ENCODE measurements at regions of chr1 and their contacts with region 1.

Region 1: DNA sequence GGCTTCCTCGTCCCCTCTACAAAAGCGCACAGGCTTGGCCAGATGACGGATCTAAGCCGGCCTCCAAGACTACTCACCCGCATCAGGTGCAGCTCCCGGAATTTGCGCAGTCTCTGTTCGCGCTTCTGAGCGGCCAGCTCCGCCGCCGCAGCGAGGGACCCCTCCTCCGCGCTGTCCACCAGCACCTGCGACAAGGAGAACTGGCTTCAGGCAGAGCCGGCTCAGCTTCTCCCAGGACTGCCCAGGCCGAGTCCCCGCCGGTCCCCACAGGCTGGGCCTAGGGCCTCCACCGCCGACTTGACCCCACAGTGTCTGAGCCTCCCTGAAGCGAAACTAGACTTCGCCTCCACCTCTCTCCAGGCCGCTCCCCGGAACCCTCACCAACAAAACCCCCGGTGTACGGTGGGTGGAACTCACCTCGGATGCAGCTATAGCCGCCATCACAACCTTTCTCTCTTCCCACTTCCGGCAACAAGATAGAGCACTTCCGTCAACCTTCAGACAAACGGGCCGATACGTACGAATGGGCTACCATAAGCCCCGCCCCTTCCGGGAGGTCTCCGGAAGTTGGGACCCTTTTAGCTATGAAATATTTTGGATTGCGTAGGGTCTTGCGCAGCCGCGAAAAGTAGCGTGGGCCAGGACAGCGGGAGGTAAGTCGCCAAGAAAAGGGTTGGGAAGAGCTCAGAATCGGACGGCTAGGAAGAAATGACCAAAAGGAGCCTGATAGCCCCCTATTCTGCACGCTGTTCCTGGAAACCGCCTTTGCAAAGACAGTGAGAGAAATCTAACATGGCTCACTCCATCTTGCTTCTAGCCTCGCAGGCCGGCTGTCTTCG is at the start of gene SYF2:
- DNase-seq: peak; percentile 71 to 93 (median 90)
- ATAC-seq: peak; percentile 94
- H3K4me3 ChIP-seq: peak within 1 kb of the TSS; percentile 92
- H3K4me3 Mint-ChIP-seq: no peak within 1 kb of the TSS
- H3K27ac ChIP-seq: peak within 1 kb of the TSS; percentile 91
- H3K27ac Mint-ChIP-seq: no peak within 1 kb of the TSS
- H3K4me1 ChIP-seq: peaks cover 14 to 15% of the 10 kb centered on the region in 2 donors
- H3K4me1 Mint-ChIP-seq: peaks cover 18 to 33% (median 30%) of the 10 kb centered on the region in 7 donors
- H3K27me3 ChIP-seq: no peaks in the 10 kb centered on the region
- H3K27me3 Mint-ChIP-seq: no peaks in the 10 kb centered on the region
- total RNA-seq, gene SYF2: 44.4 to 83.3 (median 59.4) TPM

Region 2: DNA sequence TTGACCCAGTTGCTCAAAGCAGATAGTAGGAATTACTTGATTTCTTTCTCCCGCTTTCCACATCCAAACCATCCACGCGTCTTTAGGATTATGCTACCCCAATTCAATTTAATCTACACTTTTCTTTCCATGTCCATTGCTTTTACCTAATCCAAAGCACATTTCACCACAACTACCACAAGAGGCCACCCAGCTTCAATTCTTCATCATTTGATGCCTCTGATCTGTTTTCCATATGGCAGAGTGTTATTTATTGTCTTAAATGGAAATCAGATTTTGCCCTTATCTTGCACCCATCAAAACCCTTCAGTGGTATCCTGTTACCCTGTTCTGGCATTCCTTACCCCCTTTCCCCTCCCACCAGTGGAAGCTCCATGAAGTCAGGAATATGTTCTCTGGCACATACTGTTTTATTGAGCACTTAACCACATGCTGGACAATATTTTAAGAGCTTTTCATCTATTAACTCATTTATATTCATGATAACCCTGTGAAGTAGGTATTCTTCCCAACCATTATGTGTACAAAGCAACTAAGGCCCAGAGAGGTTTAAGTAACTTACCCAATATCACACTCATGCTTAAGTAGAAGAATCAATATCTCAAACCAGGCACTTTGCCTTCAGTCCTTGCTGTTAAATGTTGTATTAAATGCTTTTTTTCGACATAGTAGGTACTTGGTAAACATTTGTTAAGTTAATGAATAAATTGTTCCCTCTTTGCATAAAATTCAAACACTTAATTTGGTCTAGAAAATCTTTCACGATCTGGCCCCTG is 452.4 kb before region 1 on chr1:
- CTCF ChIA-PET with region 1: no interaction called
- POLR2A ChIA-PET with region 1: no interaction called
- intact Hi-C with region 1: no loop called
- DNase-seq: no peak
- ATAC-seq: no peak
- H3K4me3 ChIP-seq: no peak overlapping the region
- H3K4me3 Mint-ChIP-seq: no peak overlapping the region
- H3K27ac ChIP-seq: no peak overlapping the region
- H3K27ac Mint-ChIP-seq: peak overlapping the region in 1 of 9 donors; percentile 15
- H3K4me1 ChIP-seq: no peaks in the 10 kb centered on the region
- H3K4me1 Mint-ChIP-seq: no peaks in the 10 kb centered on the region
- H3K27me3 ChIP-seq: no peaks in the 10 kb centered on the region
- H3K27me3 Mint-ChIP-seq: peaks cover 0 to 6% (median 0%) of the 10 kb centered on the region in 5 donors

Region 3: GRCh38 chr1:25033828-25034705 is 198.2 kb before region 1 on chr1:
- CTCF ChIA-PET with region 1: no interaction called
- POLR2A ChIA-PET with region 1: no interaction called
- intact Hi-C with region 1: no loop called
- DNase-seq: no peak
- ATAC-seq: peak; percentile 59
- H3K4me3 ChIP-seq: no peak overlapping the region
- H3K4me3 Mint-ChIP-seq: peak overlapping the region in 4 of 10 donors; percentile 6 to 75 (median 17)
- H3K27ac ChIP-seq: peak overlapping the region; percentile 77
- H3K27ac Mint-ChIP-seq: peak overlapping the region in 6 of 9 donors; percentile 15 to 92 (median 84)
- H3K4me1 ChIP-seq: peaks cover 69 to 88% of the 10 kb centered on the region in 2 donors
- H3K4me1 Mint-ChIP-seq: peaks cover 55 to 75% (median 66%) of the 10 kb centered on the region in 7 donors
- H3K27me3 ChIP-seq: no peaks in the 10 kb centered on the region
- H3K27me3 Mint-ChIP-seq: no peaks in the 10 kb centered on the region

Region 4: GRCh38 chr1:25216123-25216522 is 16.1 kb before region 1 on chr1:
- CTCF ChIA-PET with region 1: no interaction called
- POLR2A ChIA-PET with region 1: no interaction called
- intact Hi-C with region 1: no loop called
- DNase-seq: no peak
- ATAC-seq: no peak
- H3K4me3 ChIP-seq: no peak overlapping the region
- H3K4me3 Mint-ChIP-seq: no peak overlapping the region
- H3K27ac ChIP-seq: no peak overlapping the region
- H3K27ac Mint-ChIP-seq: peak overlapping the region in 2 of 9 donors; percentile 1 to 30
- H3K4me1 ChIP-seq: no peaks in the 10 kb centered on the region
- H3K4me1 Mint-ChIP-seq: peaks cover 0 to 11% (median 6%) of the 10 kb centered on the region in 7 donors
- H3K27me3 ChIP-seq: no peaks in the 10 kb centered on the region
- H3K27me3 Mint-ChIP-seq: peaks cover 0 to 7% (median 2%) of the 10 kb centered on the region in 5 donors

Region 5: DNA sequence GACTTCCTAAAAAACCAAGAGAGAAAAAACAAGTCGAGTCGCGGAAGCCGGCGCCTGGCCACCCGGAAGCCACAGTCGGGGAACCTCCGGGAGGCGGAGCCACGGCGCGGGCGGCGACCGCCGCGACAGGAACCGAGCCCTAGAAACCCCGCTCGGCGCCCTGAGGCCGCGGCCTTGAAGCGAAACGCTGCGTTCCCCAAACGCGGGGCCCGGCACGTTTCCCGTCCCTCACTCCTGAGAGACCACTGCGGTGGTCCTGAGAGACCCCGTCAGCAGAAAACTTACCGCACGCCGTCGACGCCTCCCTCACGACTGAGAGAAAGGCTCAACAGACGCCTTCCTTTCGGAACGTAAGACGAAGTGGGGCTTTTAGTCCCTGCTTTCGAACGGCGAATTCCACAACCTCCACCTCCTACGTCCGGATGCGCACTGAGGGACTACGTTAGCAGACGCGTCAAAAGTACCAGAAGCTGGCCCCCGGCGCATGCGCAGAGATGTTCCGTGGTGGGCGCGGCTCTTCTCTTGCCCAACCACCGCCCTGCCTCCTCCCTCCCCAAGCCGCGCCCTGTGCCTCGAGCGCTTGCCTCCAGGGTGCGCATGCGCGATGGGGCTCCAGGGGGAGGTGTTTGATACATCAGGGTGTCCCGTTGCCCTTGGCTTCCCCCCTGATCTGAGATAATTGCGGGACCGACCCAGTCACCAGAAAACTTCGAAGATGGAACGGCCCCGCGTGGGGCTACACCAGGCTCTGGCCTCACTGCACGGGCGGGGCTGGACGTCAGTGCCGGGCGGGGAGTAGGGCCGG is 15.0 kb after region 1 on chr1 and contains the start of gene RSRP1:
- CTCF ChIA-PET with region 1: interaction called, 5 read pairs
- POLR2A ChIA-PET with region 1: interaction called, 182 read pairs
- intact Hi-C with region 1: loop called (anchors 1 kb)
- DNase-seq: peak; percentile 99 to 100 (median 99)
- ATAC-seq: peak; percentile 91
- H3K4me3 ChIP-seq: peak within 1 kb of the TSS; percentile 94
- H3K4me3 Mint-ChIP-seq: peak within 1 kb of the TSS; percentile 96 to 99 (median 97)
- H3K27ac ChIP-seq: peak within 1 kb of the TSS; percentile 98
- H3K27ac Mint-ChIP-seq: peak within 1 kb of the TSS; percentile 98 to 100 (median 100)
- H3K4me1 ChIP-seq: peaks cover 30 to 35% of the 10 kb centered on the region in 2 donors
- H3K4me1 Mint-ChIP-seq: peaks cover 28 to 65% (median 51%) of the 10 kb centered on the region in 7 donors
- H3K27me3 ChIP-seq: no peaks in the 10 kb centered on the region
- H3K27me3 Mint-ChIP-seq: peaks cover 0 to 8% (median 0%) of the 10 kb centered on the region in 5 donors
- total RNA-seq, gene RSRP1: 230 to 449 (median 425) TPM

Region 6: DNA sequence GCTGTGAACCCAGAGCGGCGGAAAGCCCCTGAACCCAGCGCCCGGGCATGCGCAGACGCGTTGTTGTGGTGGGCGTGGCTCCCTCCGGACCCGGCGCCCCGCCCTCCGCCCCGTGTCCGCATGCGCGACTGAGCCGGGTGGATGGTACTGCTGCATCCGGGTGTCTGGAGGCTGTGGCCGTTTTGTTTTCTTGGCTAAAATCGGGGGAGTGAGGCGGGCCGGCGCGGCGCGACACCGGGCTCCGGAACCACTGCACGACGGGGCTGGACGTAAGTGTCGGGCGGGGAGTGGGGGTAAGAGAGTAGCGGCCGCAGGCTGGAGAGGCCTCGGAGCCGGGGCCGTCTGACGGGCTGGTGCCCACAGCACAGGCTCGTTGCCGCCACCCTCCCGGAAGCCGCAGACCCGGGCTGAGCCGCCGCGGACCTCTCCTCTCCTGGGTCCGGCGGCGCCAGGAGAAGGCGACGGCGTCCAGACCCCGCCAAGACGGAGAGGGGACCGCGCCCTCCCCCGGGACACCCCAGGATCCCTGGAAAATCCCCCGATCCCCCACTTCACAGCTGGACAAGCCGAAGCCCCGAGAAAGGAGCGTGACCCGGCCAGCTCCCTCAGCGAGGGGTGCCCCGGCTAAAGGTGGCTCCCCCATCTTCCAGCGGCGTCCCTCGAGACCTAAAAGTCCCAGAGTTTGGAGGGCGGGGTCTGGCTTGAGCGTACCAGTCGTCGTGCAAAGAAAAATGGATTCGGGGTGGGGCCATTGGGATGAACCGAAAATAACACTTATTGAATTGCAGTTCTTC is 106.1 kb after region 1 on chr1 and contains the start of gene TMEM50A:
- CTCF ChIA-PET with region 1: no interaction called
- POLR2A ChIA-PET with region 1: interaction called, 13 read pairs
- intact Hi-C with region 1: loop called in 1 of 2 experiments (anchors 2 kb)
- DNase-seq: peak; percentile 87 to 99 (median 92)
- ATAC-seq: peak; percentile 90
- H3K4me3 ChIP-seq: peak within 1 kb of the TSS; percentile 94
- H3K4me3 Mint-ChIP-seq: peak within 1 kb of the TSS; percentile 93 to 97 (median 94)
- H3K27ac ChIP-seq: peak within 1 kb of the TSS; percentile 97
- H3K27ac Mint-ChIP-seq: peak within 1 kb of the TSS; percentile 80 to 96 (median 94)
- H3K4me1 ChIP-seq: peaks cover 20 to 22% of the 10 kb centered on the region in 2 donors
- H3K4me1 Mint-ChIP-seq: peaks cover 26 to 58% (median 45%) of the 10 kb centered on the region in 7 donors
- H3K27me3 ChIP-seq: no peaks in the 10 kb centered on the region
- H3K27me3 Mint-ChIP-seq: no peaks in the 10 kb centered on the region
- total RNA-seq, gene TMEM50A: 61.6 to 149 (median 79.0) TPM

Region 7: DNA sequence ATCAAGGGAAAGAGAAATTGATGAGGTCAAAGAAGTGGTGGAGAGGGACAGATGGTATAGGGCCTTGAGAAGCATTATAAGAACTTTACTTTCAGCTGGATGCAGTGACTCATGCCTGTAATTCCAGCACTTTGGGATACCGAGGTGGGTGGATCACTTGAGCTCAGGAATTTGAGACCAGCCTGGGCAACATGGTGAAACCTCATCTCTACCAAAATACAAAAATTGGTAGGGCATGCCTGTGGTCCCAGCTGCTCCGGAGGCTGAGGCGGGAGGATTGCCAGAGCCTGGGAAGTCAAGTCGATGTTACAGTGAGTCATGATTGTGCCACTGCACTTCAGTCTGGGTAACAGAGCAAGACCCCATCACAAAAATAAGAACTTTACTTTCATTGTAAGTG is 111.6 kb after region 1 on chr1:
- CTCF ChIA-PET with region 1: no interaction called
- POLR2A ChIA-PET with region 1: interaction called, 13 read pairs
- intact Hi-C with region 1: loop called in 1 of 2 experiments (anchors 2 kb)
- DNase-seq: no peak
- ATAC-seq: no peak
- H3K4me3 ChIP-seq: no peak overlapping the region
- H3K4me3 Mint-ChIP-seq: peak overlapping the region in 1 of 10 donors; percentile 58
- H3K27ac ChIP-seq: no peak overlapping the region
- H3K27ac Mint-ChIP-seq: peak overlapping the region in 2 of 9 donors; percentile 10 to 84
- H3K4me1 ChIP-seq: peaks cover 20 to 26% of the 10 kb centered on the region in 2 donors
- H3K4me1 Mint-ChIP-seq: peaks cover 25 to 62% (median 46%) of the 10 kb centered on the region in 7 donors
- H3K27me3 ChIP-seq: no peaks in the 10 kb centered on the region
- H3K27me3 Mint-ChIP-seq: no peaks in the 10 kb centered on the region

Measured in naive thymus-derived CD4-positive, alpha-beta T cell (primary cell).